AG04449 (cell line): ENCODE measurements at regions of chr12 and their contacts with region 1.

Region 1: DNA sequence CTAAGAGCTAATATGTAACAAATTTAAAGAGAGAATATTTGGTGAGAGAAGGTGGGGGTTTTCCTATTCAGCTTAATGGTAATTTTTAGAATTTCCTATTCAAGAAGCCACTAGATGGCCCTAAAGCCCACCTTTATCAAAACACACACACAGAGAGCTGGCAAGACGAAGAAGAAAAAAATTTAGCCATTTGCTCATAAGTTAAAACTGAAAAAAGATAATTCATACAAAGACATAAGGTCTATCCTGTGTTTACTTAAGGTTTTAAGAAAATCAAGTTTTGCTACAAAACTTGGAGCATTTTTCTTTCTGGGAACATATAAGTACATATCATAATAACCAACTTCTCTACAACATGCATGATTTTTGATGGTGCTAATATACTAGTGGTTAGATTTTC is 46.8 kb upstream of the PCED1B start:
- DNase-seq: no peak
- H3K4me3 ChIP-seq: no peak overlapping the region
- CTCF ChIP-seq: peak; percentile 27

Region 2: DNA sequence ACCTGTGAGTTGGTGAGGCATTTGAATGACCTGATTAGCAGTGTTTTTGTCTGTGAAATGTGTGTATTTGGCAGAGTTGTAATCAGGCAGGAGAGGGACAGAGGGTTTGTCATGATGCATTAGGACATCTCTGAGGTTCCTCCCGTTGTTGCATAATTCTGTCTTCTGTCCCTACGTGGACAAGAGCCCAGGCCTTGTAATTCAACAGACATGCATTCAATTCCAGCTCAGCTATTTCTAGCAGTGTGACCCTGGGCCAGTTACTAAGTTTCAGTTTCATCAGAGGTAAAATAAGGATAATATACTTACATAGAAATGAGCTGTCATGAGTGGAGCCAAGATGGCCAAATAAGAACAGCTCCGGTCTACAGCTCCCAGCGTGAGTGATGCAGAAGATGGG is 415.5 kb before region 1 on chr12:
- CTCF ChIA-PET with region 1: no interaction called
- POLR2A ChIA-PET with region 1: no interaction called
- DNase-seq: peak; percentile 68
- H3K4me3 ChIP-seq: no peak overlapping the region
- CTCF ChIP-seq: no peak

Region 3: DNA sequence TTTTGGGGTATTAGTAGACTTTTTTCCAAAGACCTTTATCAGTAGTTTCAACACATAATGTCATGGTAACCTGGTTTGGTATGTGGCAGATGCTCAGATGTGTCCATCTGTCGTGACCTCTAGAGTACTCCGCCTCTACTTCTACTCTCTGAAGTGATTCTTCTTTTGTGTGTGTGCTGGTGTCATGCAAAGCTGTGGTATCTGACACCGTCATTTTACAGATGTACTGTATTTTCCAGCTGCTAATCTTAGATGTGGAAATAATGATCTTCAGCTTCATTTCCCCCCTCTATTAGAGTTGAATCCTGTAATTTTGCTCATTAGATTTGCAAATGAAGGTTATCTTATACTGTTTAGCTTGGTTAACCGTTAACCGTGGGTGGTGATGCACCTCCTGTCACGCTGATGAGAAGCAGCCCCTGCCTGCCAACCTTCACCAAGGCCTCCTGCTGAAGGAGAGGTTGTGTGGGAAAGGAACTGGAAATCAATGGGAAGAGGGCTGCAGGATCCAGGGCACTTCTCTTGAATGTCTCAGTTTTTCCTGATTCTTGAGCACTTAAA is 269.5 kb after region 1 on chr12:
- CTCF ChIA-PET with region 1: interaction called, 57 read pairs
- POLR2A ChIA-PET with region 1: interaction called, 3 read pairs
- DNase-seq: no peak
- H3K4me3 ChIP-seq: no peak overlapping the region
- CTCF ChIP-seq: no peak

Region 4: GRCh38 chr12:47397664-47398281 is 365.1 kb after region 1 on chr12:
- CTCF ChIA-PET with region 1: interaction called, 76 read pairs
- POLR2A ChIA-PET with region 1: no interaction called
- DNase-seq: no peak
- H3K4me3 ChIP-seq: no peak overlapping the region
- CTCF ChIP-seq: peak; percentile 45

Region 5: GRCh38 chr12:47636908-47637780 is 604.5 kb after region 1 on chr12:
- CTCF ChIA-PET with region 1: interaction called, 10 read pairs
- POLR2A ChIA-PET with region 1: no interaction called
- DNase-seq: no peak
- H3K4me3 ChIP-seq: no peak overlapping the region
- CTCF ChIP-seq: peak; percentile 33